B cell (primary cell): ENCODE measurements at regions of chr5 and their contacts with region 1.

Region 1: GRCh38 chr5:95646554-95647431 is at the start of gene RFESD:
- DNase-seq: peak; percentile 95
- ATAC-seq: peak; percentile 97
- H3K4me3 ChIP-seq: peak within 1 kb of the TSS; percentile 56 to 87 (median 80)
- H3K4me3 Mint-ChIP-seq: peak within 1 kb of the TSS; percentile 90
- H3K27ac ChIP-seq: peak within 1 kb of the TSS; percentile 68 to 75
- H3K27ac Mint-ChIP-seq: peak within 1 kb of the TSS; percentile 93
- H3K4me1 ChIP-seq: peaks cover 14 to 20% of the 10 kb centered on the region in 2 donors
- H3K4me1 Mint-ChIP-seq: peaks cover 18% of the 10 kb centered on the region
- H3K27me3 ChIP-seq: no peaks in the 10 kb centered on the region
- H3K27me3 Mint-ChIP-seq: no peaks in the 10 kb centered on the region
- CTCF ChIP-seq: peak; percentile 28
- total RNA-seq, gene RFESD: 1.9 and 3.0 TPM in 2 replicates

Region 2: GRCh38 chr5:95554647-95555548 is 91.9 kb before region 1 on chr5 and contains the starts of genes ARSK and SKIC3:
- CTCF ChIA-PET with region 1: interaction called, 5 read pairs
- POLR2A ChIA-PET with region 1: no interaction called
- intact Hi-C with region 1: loop called (anchors 1 kb)
- DNase-seq: peak; percentile 99
- ATAC-seq: peak; percentile 85
- H3K4me3 ChIP-seq: peak within 1 kb of the TSS; percentile 70 to 91 (median 81)
- H3K4me3 Mint-ChIP-seq: peak within 1 kb of the TSS; percentile 93
- H3K27ac ChIP-seq: peak within 1 kb of the TSS; percentile 71 to 80
- H3K27ac Mint-ChIP-seq: peak within 1 kb of the TSS; percentile 90
- H3K4me1 ChIP-seq: peaks cover 14 to 20% of the 10 kb centered on the region in 2 donors
- H3K4me1 Mint-ChIP-seq: peaks cover 41% of the 10 kb centered on the region
- H3K27me3 ChIP-seq: no peaks in the 10 kb centered on the region
- H3K27me3 Mint-ChIP-seq: no peaks in the 10 kb centered on the region
- CTCF ChIP-seq: peak; percentile 29
- total RNA-seq, gene ARSK: 5.1 and 5.5 TPM in 2 replicates
- total RNA-seq, gene SKIC3: 75.4 and 85.3 TPM in 2 replicates

Region 3: DNA sequence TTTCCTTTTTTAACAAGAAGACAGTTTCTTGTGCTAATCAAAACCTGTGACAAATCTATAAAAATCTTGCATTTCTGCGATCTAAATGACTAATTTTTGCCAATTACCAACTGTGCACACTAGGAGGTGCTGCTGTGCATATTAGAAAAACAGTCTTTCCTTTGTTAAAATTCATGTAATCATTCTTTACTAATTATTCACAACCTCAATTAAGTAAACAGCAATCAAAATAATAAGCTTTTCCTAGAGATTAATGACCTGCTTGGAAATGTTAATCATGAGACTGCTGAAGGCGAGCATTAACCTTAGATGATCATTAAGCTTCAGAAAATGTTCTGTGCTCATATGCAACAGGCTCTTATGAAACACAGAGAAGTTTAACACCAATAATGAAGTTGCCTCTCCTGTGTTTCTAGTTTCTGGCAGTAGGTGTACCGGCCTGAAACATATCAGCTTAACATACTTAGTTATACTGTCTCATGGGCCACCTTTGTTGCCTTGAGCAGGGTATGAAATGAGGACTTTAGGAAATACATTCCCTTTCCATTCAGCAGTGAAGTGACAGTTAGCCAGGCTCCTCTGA is 17.5 kb after region 1 on chr5:
- CTCF ChIA-PET with region 1: interaction called, 18 read pairs
- POLR2A ChIA-PET with region 1: no interaction called
- intact Hi-C with region 1: loop called (anchors 1 kb)
- DNase-seq: peak; percentile 56
- ATAC-seq: no peak
- H3K4me3 ChIP-seq: no peak overlapping the region
- H3K4me3 Mint-ChIP-seq: no peak overlapping the region
- H3K27ac ChIP-seq: no peak overlapping the region
- H3K27ac Mint-ChIP-seq: no peak overlapping the region
- H3K4me1 ChIP-seq: no peaks in the 10 kb centered on the region
- H3K4me1 Mint-ChIP-seq: no peaks in the 10 kb centered on the region
- H3K27me3 ChIP-seq: no peaks in the 10 kb centered on the region
- H3K27me3 Mint-ChIP-seq: no peaks in the 10 kb centered on the region
- CTCF ChIP-seq: peak; percentile 95

Region 4: DNA sequence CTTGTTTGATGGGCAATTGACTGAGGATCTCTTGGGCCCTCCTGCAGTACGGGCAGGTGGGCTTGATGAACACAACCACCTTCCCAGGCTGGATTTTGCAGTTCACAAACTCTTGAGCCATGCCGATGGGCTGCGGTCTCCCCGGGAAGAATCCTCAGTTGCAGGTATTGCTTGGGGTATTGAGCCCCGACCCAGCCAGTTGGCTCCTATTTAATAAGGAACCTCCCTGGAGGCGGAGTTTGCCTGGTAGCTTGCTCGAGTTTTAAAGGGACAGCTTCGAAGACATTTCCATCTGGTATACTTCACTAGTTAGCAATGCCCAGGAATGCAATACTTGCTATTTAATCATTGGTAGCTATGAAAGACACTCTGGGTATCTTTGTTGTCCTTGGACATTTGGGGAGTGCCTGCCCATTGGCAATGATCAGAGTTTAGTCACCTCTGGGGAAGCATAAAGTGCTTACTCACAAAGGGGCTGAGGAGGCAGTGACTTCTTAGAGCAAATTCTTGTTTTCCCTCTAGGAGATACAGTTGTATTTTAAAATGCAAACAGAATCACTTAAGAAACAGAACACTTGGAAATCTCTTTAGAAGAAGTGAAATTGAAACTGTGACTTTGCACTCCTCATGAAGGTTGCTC is 175.9 kb after region 1 on chr5 and contains the start of gene GLRX:
- CTCF ChIA-PET with region 1: interaction called, 4 read pairs
- POLR2A ChIA-PET with region 1: interaction called, 12 read pairs
- intact Hi-C with region 1: loop called (anchors 1 kb)
- DNase-seq: peak; percentile 63
- ATAC-seq: peak; percentile 41
- H3K4me3 ChIP-seq: peak within 1 kb of the TSS; percentile 70 to 100 (median 97)
- H3K4me3 Mint-ChIP-seq: peak within 1 kb of the TSS; percentile 99
- H3K27ac ChIP-seq: peak within 1 kb of the TSS; percentile 67 to 90
- H3K27ac Mint-ChIP-seq: peak within 1 kb of the TSS; percentile 99
- H3K4me1 ChIP-seq: peaks cover 52 to 59% of the 10 kb centered on the region in 2 donors
- H3K4me1 Mint-ChIP-seq: peaks cover 70% of the 10 kb centered on the region
- H3K27me3 ChIP-seq: no peaks in the 10 kb centered on the region
- H3K27me3 Mint-ChIP-seq: no peaks in the 10 kb centered on the region
- CTCF ChIP-seq: no peak
- total RNA-seq, gene GLRX: 44.6 and 50.0 TPM in 2 replicates

Region 5: DNA sequence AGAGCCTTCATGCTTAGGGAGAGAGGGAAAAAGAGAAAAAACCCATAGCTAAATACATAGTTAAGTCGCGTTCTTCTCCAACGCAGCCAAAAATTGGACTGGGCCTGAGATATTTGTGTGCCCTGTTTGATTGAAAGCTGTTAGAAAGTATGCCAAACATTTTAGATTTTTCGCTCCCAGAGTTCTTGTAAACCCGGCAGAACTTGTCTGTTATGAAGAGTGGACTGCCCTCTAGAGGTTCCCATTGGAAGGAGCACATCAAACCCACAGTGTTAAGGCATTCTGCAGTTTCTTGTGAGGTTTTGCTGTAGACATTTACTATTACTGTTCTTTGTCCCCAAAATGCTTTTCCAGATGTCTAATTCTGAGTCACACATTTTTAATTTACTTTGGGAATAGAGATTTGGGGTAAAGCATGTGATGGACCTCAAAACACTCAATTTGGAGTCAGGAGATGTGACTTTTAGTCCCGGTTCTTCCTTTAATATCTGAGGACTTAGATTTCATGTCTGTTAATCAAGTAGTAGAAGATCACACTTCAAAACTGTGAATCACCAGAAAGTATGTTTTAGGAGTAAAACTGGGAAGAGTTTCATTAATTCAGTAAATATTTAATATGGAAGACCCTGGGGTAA is 689.7 kb after region 1 on chr5:
- CTCF ChIA-PET with region 1: interaction called, 4 read pairs
- POLR2A ChIA-PET with region 1: no interaction called
- intact Hi-C with region 1: loop called (anchors 5 kb)
- DNase-seq: peak; percentile 75
- ATAC-seq: peak; percentile 78
- H3K4me3 ChIP-seq: no peak overlapping the region
- H3K4me3 Mint-ChIP-seq: no peak overlapping the region
- H3K27ac ChIP-seq: no peak overlapping the region
- H3K27ac Mint-ChIP-seq: no peak overlapping the region
- H3K4me1 ChIP-seq: peaks cover 0 to 4% of the 10 kb centered on the region in 2 donors
- H3K4me1 Mint-ChIP-seq: no peaks in the 10 kb centered on the region
- H3K27me3 ChIP-seq: no peaks in the 10 kb centered on the region
- H3K27me3 Mint-ChIP-seq: peaks cover 15% of the 10 kb centered on the region
- CTCF ChIP-seq: peak; percentile 88

Region 6: DNA sequence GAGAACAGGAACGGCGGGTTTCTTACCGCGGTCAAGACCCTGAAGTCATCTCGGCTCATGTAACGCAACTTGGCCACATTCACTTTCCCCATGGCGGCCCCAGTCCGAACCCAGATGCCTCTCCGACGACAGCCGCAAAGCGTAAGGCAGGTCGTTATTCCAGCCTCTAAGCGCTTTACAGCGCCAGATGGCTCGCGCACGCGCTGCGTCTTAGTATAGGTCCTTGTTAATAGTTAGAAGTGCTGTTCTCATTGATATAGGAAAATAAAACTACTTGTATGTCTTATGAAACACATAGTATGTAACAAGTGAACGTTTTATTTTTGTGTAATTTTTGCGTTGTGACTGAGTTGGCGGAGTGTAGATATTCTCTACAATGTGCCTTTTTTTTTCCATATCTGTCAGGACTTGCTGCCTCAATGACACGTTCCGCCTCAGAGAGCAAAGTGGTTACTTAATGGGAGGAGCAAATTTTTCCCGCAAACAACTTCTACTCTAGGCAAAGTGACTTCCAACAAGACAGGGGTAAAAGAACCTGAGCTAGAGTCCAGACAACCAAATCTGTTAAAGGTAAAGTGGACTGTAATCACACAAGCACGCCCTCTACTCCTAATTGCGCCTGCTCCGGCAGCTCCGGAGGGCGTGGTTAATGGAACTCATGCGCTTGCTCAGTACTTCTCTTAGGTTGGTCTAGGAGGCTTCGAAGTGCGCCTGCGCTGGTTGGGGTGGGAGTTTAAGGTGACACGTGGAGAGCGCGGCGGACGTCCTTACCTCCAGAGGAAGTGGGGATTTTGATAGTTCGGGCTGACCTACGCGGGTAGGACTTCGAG is 1536.5 kb after region 1 on chr5 and contains the start of gene RIOK2:
- CTCF ChIA-PET with region 1: interaction called, 5 read pairs
- POLR2A ChIA-PET with region 1: no interaction called
- intact Hi-C with region 1: loop called (anchors 10 kb)
- DNase-seq: peak; percentile 93
- ATAC-seq: peak; percentile 87
- H3K4me3 ChIP-seq: peak within 1 kb of the TSS; percentile 68 to 96 (median 88)
- H3K4me3 Mint-ChIP-seq: peak within 1 kb of the TSS; percentile 97
- H3K27ac ChIP-seq: peak within 1 kb of the TSS; percentile 91 to 99
- H3K27ac Mint-ChIP-seq: peak within 1 kb of the TSS; percentile 100
- H3K4me1 ChIP-seq: peaks cover 12 to 15% of the 10 kb centered on the region in 2 donors
- H3K4me1 Mint-ChIP-seq: peaks cover 33% of the 10 kb centered on the region
- H3K27me3 ChIP-seq: no peaks in the 10 kb centered on the region
- H3K27me3 Mint-ChIP-seq: no peaks in the 10 kb centered on the region
- CTCF ChIP-seq: no peak
- total RNA-seq, gene RIOK2: 32.8 and 37.2 TPM in 2 replicates